K562 (cell line): ENCODE measurements at regions of chr14 and their contacts with region 1.

Region 1: DNA sequence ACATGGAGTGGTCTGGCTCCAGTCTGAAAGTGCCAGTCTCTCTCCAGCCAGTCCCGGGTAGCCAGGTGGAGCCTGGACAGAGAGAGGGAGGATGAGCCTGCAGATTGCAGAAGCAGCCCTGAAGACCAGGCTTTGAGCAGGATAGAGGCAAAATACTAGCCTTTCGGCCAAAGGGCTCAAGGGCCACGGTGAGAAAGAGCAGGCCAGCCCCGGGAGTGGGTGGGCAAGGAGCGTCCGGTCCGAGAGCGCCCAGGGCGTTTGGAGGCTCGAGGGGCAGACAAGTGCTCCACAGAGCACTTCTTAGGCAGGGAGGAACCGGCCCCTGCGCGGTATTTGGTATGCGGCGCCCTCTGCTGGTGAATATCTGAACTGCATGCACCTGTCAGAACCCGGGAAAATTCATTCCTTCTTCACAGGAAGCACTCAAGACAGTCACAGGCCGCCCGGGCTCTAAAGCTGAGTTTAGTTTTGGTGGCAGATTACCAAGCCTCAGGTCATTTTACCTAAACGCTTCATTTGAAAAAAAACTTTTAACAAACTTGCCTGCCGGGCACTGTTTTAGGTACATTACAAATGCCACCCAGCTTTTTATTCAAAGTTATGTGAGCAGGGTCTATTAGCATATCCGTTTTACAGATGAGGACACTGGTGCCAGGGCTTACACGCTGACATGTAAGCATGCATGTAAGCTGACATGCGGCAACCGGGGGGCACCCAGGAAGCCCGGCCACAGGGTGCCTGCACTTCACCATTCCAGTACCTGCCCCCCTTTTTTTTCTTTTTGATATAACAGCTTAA is 21.0 kb upstream of the PSMC1 start:
- DNase-seq: peak; percentile 66 to 77 (median 72)
- ATAC-seq: peak; percentile 94
- H3K4me3 ChIP-seq: no peak overlapping the region
- H3K27ac ChIP-seq: no peak overlapping the region
- H3K4me1 ChIP-seq: peaks cover 0 to 4% of the 10 kb centered on the region in 2 experiments; a peak in 2 of 5 replicates
- H3K27me3 ChIP-seq: no peaks in the 10 kb centered on the region
- CTCF ChIP-seq: peak; percentile 70 to 80 (median 78)
- EP300 ChIP-seq: no peak
- POLR2A ChIP-seq: no peak
- RAD21 ChIP-seq: peak; percentile 45 to 75

Region 2: GRCh38 chr14:89936658-89937185 is 298.7 kb before region 1 on chr14:
- CTCF ChIA-PET with region 1: interaction called, 3 read pairs
- POLR2A ChIA-PET with region 1: no interaction called
- in situ Hi-C with region 1: loop called (anchors 25 kb)
- intact Hi-C with region 1: loop called (anchors 2 kb)
- DNase-seq: no peak
- ATAC-seq: no peak
- H3K4me3 ChIP-seq: no peak overlapping the region
- H3K27ac ChIP-seq: no peak overlapping the region
- H3K4me1 ChIP-seq: no peaks in the 10 kb centered on the region
- H3K27me3 ChIP-seq: no peaks in the 10 kb centered on the region
- CTCF ChIP-seq: no peak
- EP300 ChIP-seq: no peak
- POLR2A ChIP-seq: no peak
- RAD21 ChIP-seq: no peak

Region 3: DNA sequence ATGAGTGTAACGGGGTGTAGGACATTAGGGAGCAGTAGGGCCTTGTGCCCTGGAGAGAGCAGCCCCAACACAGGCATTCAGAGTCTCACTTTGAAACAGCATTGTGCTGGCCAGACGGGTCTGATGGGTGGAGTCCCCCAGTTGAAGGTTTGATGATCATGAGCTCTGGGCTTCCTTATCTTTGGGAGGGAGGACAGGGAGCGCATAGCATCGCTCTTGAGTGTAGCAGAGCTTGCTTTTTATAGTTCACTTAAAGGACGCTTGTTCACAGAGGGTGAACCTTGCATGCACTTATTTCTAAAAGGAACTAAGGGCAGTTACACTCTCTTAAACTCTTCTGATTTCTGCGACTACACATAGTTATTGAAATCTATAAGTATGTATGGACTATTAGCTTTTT is 163.0 kb before region 1 on chr14:
- CTCF ChIA-PET with region 1: no interaction called
- POLR2A ChIA-PET with region 1: no interaction called
- in situ Hi-C with region 1: no loop called
- intact Hi-C with region 1: loop called (anchors 10 kb)
- DNase-seq: no peak
- ATAC-seq: no peak
- H3K4me3 ChIP-seq: no peak overlapping the region
- H3K27ac ChIP-seq: no peak overlapping the region
- H3K4me1 ChIP-seq: no peaks in the 10 kb centered on the region
- H3K27me3 ChIP-seq: peaks cover 2 to 15% of the 10 kb centered on the region in 2 experiments; a peak in 2 of 5 replicates
- CTCF ChIP-seq: no peak
- EP300 ChIP-seq: no peak
- POLR2A ChIP-seq: no peak
- RAD21 ChIP-seq: no peak

Region 4: GRCh38 chr14:90168425-90169105 is 66.8 kb before region 1 on chr14:
- CTCF ChIA-PET with region 1: no interaction called
- POLR2A ChIA-PET with region 1: no interaction called
- in situ Hi-C with region 1: no loop called
- intact Hi-C with region 1: no loop called
- DNase-seq: no peak
- ATAC-seq: no peak
- H3K4me3 ChIP-seq: no peak overlapping the region
- H3K27ac ChIP-seq: no peak overlapping the region
- H3K4me1 ChIP-seq: no peaks in the 10 kb centered on the region
- H3K27me3 ChIP-seq: no peaks in the 10 kb centered on the region
- CTCF ChIP-seq: no peak
- EP300 ChIP-seq: no peak
- POLR2A ChIP-seq: no peak
- RAD21 ChIP-seq: no peak

Region 5: GRCh38 chr14:90193925-90194324 is 41.5 kb before region 1 on chr14:
- CTCF ChIA-PET with region 1: no interaction called
- POLR2A ChIA-PET with region 1: no interaction called
- in situ Hi-C with region 1: no loop called
- intact Hi-C with region 1: loop called (anchors 2 kb)
- DNase-seq: peak in 3 of 4 experiments; percentile 16 to 34 (median 20)
- ATAC-seq: peak; percentile 84
- H3K4me3 ChIP-seq: no peak overlapping the region
- H3K27ac ChIP-seq: no peak overlapping the region
- H3K4me1 ChIP-seq: no peaks in the 10 kb centered on the region; a peak in 1 of 5 replicates
- H3K27me3 ChIP-seq: peaks cover 0 to 12% of the 10 kb centered on the region in 2 experiments; a peak in 2 of 5 replicates
- CTCF ChIP-seq: peak; percentile 19 to 43 (median 37); a peak in 3 of 6 replicates
- EP300 ChIP-seq: no peak
- POLR2A ChIP-seq: no peak
- RAD21 ChIP-seq: peak in 1 of 2 experiments; percentile 26; a peak in 2 of 4 replicates